ENCODE measurements at regions of chr15 and their contacts with region 1.

Region 1: GRCh38 chr15:78618490-78618934 is 2.3 kb downstream of the CHRNA3 start:
- DNase-seq: peak; percentile 76 to 93
- ATAC-seq: peak; percentile 81

Region 2: GRCh38 chr15:78396976-78397375 is 221.5 kb before region 1 on chr15:
- intact Hi-C with region 1: no loop called
- DNase-seq: peak; percentile 81 to 82
- ATAC-seq: peak; percentile 85

Region 3: DNA sequence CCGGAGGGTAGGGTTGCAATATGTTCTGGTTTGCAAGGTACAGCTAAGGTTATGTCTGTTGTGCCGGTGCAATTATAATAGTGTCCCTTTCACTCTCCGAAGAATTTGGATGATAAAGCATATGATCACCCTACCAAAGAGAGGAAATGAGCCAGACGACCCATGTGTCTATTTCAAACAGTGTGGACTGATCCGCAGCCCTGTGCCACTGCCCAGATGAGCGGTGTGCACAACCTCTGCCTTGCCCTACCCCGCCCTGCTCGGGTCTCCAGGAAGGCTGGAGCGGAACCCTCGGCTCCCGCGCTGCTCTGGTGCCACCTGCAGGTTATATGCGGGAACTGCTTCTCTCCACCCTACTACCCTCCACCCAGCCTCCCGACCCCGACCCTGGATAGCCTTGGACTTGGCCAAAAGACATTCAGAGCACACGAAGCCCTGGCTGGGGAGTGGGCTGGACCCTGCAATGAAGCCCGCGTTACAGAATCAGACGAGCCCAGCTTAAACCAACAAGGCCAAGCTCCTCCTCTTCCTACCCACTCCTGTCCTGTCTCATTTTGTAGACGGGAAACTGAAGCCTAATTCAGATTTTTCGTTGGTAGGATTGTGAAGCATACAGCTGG is 90.9 kb after region 1 on chr15:
- intact Hi-C with region 1: loop called (anchors 5 kb)
- DNase-seq: peak; percentile 45 to 78
- ATAC-seq: peak; percentile 100

Region 4: DNA sequence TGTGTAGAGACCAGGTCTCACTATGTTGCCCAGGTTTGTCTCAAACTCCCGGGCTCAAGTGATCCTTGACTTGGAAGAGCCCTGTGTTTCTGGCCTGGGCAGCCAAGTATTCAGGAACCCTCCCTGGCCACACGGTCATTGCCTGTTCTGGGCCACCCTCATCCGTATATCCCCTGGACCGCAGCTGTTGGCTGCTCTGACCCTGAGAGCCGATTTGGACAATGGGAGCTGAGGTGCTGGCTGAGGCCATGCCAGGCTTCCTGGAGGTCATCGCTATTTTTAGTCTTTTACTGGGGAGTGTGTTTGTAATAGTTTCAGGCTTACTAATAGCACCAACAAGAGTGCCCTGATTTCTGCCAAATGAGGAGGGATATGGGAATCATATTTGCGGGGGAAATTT is 132.1 kb after region 1 on chr15:
- intact Hi-C with region 1: loop called in 1 of 2 experiments (anchors 5 kb)
- DNase-seq: peak in 1 of 2 donors; percentile 15
- ATAC-seq: peak; percentile 10

Region 5: DNA sequence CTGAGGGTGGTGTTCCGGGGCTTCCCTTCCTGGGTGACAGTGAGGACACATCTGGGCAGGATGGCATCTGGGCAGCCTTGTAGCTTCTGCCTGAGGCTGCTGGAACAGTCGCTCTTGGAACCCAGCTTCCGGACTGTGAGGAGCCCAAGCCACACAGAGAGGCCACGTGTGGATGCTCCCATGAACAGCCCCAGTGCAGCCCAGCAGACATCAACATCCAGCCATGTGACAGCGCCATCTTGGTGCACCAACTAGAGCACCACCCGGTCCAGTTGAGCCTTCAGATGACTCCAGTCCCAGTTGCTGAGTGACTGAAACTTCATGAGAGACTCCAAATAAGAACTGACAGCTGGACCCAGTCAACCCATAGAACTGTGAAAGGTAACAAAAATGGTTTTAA is 341.8 kb after region 1 on chr15:
- intact Hi-C with region 1: no loop called
- DNase-seq: no peak
- ATAC-seq: no peak

Measured in left colon (tissue), 2 donors.